ENCODE measurements at regions of chr5 and their contacts with region 1.

Region 1: GRCh38 chr5:139293504-139294373 is at the start of gene MATR3:
- DNase-seq: peak; percentile 86 to 97 (median 92)
- ATAC-seq: peak; percentile 81 to 87
- H3K4me3 Mint-ChIP-seq: peak within 1 kb of the TSS; percentile 95 to 99 (median 98)
- H3K27ac Mint-ChIP-seq: peak within 1 kb of the TSS; percentile 96 to 100 (median 99)
- H3K4me1 Mint-ChIP-seq: peaks cover 23 to 49% (median 38%) of the 10 kb centered on the region in 4 donors
- H3K27me3 Mint-ChIP-seq: no peaks in the 10 kb centered on the region
- polyA plus RNA-seq, gene MATR3: 323 to 351 (median 327) TPM

Region 2: GRCh38 chr5:138542956-138543729 is 750.6 kb before region 1 on chr5 and contains the start of gene ETF1:
- POLR2A ChIA-PET with region 1: interaction called, 16 read pairs
- DNase-seq: peak; percentile 97 to 100 (median 100)
- ATAC-seq: peak; percentile 86 to 87
- H3K4me3 Mint-ChIP-seq: peak within 1 kb of the TSS; percentile 94 to 100 (median 100)
- H3K27ac Mint-ChIP-seq: peak within 1 kb of the TSS; percentile 99 to 100 (median 100)
- H3K4me1 Mint-ChIP-seq: peaks cover 35 to 79% (median 74%) of the 10 kb centered on the region in 4 donors
- H3K27me3 Mint-ChIP-seq: no peaks in the 10 kb centered on the region
- polyA plus RNA-seq, gene ETF1: 21.5 to 27.5 (median 24.1) TPM

Region 3: DNA sequence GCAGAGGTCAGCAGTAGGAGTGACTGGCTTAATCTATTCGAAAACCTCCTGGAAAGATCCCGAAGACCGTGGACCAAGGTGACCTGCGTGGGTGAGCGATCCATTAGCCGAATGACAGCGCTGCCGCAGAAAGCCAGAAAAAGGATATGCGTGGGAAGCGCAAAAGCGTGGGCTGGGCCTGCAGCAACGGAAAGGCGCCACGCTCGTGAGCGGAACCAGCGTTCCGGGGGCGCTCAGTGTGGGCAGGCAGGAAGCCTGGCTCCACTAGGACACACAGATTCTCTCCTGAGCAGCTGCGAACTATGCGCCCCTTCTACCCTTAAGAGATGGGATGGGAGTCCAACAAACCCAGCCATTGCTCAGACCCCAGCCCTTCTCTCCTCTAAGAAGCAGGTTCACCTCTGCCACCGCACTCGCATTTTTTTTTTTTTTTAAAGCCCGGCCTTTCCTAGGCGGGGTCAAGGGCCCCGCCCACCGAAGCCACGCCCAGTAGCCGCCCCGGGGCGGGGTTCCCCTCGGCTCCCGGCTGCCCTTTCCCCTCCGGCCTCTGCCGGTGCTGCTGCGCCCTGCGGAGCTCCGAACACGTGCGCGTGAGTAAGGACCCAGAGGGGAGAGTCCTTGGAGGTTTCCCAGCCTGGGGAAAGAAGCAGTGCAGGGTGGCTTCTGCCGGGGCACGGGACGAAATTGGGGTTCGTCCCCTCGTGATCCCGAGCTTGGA is 20.0 kb before region 1 on chr5:
- POLR2A ChIA-PET with region 1: interaction called, 88 read pairs
- DNase-seq: peak; percentile 66 to 93 (median 83)
- ATAC-seq: peak; percentile 82 to 88
- H3K4me3 Mint-ChIP-seq: peak overlapping the region; percentile 80 to 94 (median 88)
- H3K27ac Mint-ChIP-seq: peak overlapping the region; percentile 72 to 95 (median 90)
- H3K4me1 Mint-ChIP-seq: peaks cover 32 to 57% (median 55%) of the 10 kb centered on the region in 4 donors
- H3K27me3 Mint-ChIP-seq: no peaks in the 10 kb centered on the region

Region 4: GRCh38 chr5:139341650-139342422 is 48.1 kb after region 1 on chr5 and contains the start of gene PAIP2:
- POLR2A ChIA-PET with region 1: interaction called, 126 read pairs
- DNase-seq: peak; percentile 95 to 99 (median 98)
- ATAC-seq: peak; percentile 82
- H3K4me3 Mint-ChIP-seq: peak within 1 kb of the TSS; percentile 89 to 100 (median 97)
- H3K27ac Mint-ChIP-seq: peak within 1 kb of the TSS; percentile 97 to 100 (median 98)
- H3K4me1 Mint-ChIP-seq: peaks cover 26 to 60% (median 55%) of the 10 kb centered on the region in 4 donors
- H3K27me3 Mint-ChIP-seq: no peaks in the 10 kb centered on the region
- polyA plus RNA-seq, gene PAIP2: 359 to 455 (median 406) TPM

Region 5: DNA sequence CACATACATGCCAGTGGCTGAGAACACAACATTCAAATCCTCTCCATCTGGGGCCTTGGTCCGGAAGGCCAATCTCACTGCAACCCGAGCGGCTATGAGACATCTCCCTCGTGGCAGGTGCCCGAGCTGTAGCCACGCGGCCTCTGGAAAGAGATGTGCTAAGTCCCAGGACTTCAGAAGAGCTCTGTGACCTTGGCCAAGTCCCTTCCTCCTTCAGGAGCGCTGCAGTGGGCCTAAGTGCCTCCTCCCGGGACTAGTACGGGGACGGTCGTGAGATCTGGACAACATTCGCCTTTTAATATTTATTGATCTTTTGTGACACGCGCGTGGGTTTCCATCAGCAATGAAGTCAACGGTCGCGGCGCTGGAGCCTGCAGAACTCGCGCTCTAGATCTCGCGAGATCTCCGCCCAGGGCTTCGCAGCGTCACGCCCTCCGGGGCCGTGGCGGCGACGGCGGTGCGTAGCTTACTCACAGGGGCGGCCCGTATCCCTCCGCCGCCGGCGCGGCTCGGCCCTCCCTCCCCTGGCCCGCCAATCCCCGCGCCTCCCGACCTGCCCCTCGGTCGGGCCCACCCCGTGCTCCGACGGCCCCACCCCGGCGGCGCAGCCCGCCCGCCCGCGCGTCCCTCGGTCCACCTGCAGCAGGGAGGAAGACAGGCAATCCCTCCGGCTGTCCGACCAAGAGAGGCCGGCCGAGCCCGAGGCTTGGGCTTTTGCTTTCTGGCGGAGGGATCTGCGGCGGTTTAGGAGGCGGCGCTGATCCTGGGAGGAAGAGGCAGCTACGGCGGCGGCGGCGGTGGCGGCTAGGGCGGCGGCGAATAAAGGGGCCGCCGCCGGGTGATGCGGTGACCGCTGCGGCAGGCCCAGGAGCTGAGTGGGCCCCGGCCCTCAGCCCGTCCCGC is 267.3 kb after region 1 on chr5 and contains the start of gene UBE2D2:
- POLR2A ChIA-PET with region 1: interaction called, 13 read pairs
- DNase-seq: peak; percentile 95 to 98 (median 98)
- ATAC-seq: peak; percentile 74 to 82
- H3K4me3 Mint-ChIP-seq: peak within 1 kb of the TSS; percentile 92 to 100 (median 99)
- H3K27ac Mint-ChIP-seq: peak within 1 kb of the TSS; percentile 93 to 99 (median 96)
- H3K4me1 Mint-ChIP-seq: peaks cover 10 to 45% (median 33%) of the 10 kb centered on the region in 4 donors
- H3K27me3 Mint-ChIP-seq: no peaks in the 10 kb centered on the region
- polyA plus RNA-seq, gene UBE2D2: 356 to 403 (median 359) TPM

Measured in naive thymus-derived CD8-positive, alpha-beta T cell (primary cell).